ENCODE measurements at regions of chr2 and their contacts with region 1.

Region 1: DNA sequence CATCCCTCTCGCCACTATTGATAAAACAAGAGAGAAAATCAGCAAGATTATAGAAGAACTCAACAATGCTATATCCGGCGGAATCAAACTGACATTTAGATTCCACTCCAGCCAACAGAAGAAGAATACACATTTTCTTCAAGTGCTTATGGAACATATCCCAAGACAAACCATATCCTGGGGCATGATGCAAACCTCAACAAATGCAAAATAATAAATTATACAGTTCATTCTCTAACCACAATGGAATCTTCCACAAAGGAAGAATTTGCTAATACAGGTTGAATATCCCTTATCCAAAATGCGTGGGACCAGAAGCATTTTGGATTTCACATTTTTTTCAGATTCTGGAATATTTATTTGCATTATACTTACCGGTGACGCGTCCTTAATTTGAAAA is 51.4 kb upstream of the YPEL5 start:
- DNase-seq: no peak
- ATAC-seq: no peak
- H3K4me3 Mint-ChIP-seq: no peak overlapping the region
- H3K27ac Mint-ChIP-seq: no peak overlapping the region
- H3K4me1 Mint-ChIP-seq: no peaks in the 10 kb centered on the region
- H3K27me3 Mint-ChIP-seq: peaks cover 20% of the 10 kb centered on the region

Region 2: DNA sequence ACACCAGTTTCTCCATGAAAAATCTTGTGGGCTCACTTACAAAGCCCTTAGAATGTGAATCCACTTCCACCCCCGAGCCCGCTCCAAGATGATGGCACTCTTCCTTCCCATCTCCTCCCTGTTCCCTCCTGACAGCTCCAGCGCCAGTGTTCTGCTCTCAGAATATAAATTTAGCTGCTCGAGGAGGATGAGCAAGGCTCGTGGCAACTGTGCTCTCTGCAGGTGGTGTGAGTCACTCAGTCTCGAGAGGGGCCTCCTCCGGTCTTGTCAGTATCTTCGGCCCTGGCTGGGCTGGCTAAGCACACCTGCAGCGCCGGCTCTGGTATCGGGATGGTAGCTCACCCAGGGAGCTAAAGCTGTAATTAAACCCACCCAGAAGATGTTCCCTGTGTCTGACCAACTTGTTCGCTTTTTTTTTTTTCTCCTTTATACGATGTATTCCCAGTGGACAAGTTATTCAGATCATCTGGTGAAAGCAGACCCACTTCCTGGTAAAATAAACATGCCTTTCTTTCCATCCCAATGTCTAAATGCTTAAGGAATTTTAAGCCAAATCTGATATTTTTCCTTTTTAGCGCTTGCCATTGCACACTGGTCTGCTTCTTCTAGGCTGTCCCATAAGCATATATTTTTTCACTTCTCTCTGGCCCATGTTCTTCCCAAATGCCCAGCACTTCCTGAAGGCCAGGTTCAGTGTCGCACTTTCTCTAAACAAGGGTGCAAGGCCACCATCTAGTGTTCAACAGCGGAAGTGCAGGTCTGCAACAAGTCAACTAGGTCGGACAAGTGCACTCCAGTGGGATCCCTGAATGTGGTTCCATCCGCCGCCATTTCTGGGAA is 20.0 kb after region 1 on chr2:
- CTCF ChIA-PET with region 1: interaction called, 8 read pairs
- POLR2A ChIA-PET with region 1: no interaction called
- intact Hi-C with region 1: loop called (anchors 1 kb)
- DNase-seq: peak; percentile 81
- ATAC-seq: peak; percentile 65
- H3K4me3 Mint-ChIP-seq: no peak overlapping the region
- H3K27ac Mint-ChIP-seq: no peak overlapping the region
- H3K4me1 Mint-ChIP-seq: peaks cover 4% of the 10 kb centered on the region
- H3K27me3 Mint-ChIP-seq: peaks cover 2% of the 10 kb centered on the region

Region 3: GRCh38 chr2:31347750-31348149 is 1252.3 kb after region 1 on chr2:
- CTCF ChIA-PET with region 1: no interaction called
- POLR2A ChIA-PET with region 1: no interaction called
- intact Hi-C with region 1: no loop called
- DNase-seq: no peak
- ATAC-seq: no peak
- H3K4me3 Mint-ChIP-seq: no peak overlapping the region
- H3K27ac Mint-ChIP-seq: no peak overlapping the region
- H3K4me1 Mint-ChIP-seq: no peaks in the 10 kb centered on the region
- H3K27me3 Mint-ChIP-seq: peaks cover 15% of the 10 kb centered on the region

Measured in activated CD4-positive, alpha-beta T cell treated with anti-CD3 and anti-CD28 coated beads for 36 hours (primary cell).